A673 (cell line): ENCODE measurements at regions of chr1 and their contacts with region 1.

Region 1: DNA sequence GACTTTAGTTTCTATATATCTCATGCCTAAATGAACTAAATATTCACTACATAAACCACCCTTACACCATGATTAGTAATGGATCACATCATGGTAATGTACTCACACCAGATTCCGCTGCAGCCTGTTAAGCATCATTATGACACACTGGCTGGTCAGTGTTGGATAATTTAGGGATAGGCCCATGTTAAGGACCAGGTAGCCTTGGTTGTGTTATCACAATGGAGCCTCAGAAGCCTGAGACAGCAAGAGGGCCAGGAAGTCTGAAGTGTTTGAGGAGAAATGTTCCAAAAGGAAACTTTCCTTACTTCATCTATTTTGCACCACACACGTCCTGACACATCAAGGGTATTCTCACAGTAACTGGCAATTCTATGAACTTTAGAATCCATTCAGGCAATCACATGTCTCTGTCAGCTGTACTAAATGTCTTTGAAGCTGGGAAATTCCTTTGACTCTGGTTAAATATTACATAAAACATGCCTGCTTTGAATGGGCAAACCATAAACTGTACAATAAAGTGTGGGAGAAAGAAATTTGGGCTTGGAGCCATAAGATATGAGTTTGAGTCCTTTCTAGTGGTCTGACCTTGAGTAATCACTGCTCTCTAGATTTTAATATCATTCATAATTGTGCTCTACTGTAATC is 105.3 kb upstream of the DPT start:
- DNase-seq: peak; percentile 10
- H3K4me3 ChIP-seq: no peak overlapping the region
- H3K27ac ChIP-seq: peak overlapping the region; percentile 76
- H3K4me1 ChIP-seq: peaks cover 31% of the 10 kb centered on the region
- H3K27me3 ChIP-seq: no peaks in the 10 kb centered on the region
- CTCF ChIP-seq: no peak

Region 2: GRCh38 chr1:168488138-168488537 is 346.2 kb before region 1 on chr1:
- CTCF ChIA-PET with region 1: no interaction called
- POLR2A ChIA-PET with region 1: no interaction called
- intact Hi-C with region 1: no loop called
- DNase-seq: no peak
- H3K4me3 ChIP-seq: no peak overlapping the region
- H3K27ac ChIP-seq: no peak overlapping the region
- H3K4me1 ChIP-seq: no peaks in the 10 kb centered on the region
- H3K27me3 ChIP-seq: no peaks in the 10 kb centered on the region
- CTCF ChIP-seq: no peak

Region 3: DNA sequence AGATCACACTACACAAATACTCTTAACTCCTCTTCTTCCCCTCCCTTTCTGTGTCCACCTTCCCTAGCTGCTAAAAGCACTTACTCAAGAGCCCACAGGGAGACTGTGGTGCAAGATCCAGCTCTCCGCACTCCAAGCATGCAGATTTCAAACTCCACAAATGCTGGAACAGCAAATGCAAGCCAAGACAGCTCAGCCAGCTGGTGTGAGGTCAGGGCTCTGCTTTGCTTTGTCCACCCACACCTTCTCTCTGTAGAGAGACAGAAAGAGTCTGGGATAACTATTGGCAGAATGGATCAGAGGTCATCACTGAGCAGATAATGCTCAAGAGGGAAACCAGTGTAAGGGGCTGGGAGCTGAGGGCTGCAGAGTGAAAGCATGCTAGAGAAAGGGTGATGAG is 60.1 kb before region 1 on chr1:
- CTCF ChIA-PET with region 1: no interaction called
- POLR2A ChIA-PET with region 1: no interaction called
- intact Hi-C with region 1: no loop called
- DNase-seq: no peak
- H3K4me3 ChIP-seq: no peak overlapping the region
- H3K27ac ChIP-seq: no peak overlapping the region
- H3K4me1 ChIP-seq: no peaks in the 10 kb centered on the region
- H3K27me3 ChIP-seq: no peaks in the 10 kb centered on the region
- CTCF ChIP-seq: no peak

Region 4: DNA sequence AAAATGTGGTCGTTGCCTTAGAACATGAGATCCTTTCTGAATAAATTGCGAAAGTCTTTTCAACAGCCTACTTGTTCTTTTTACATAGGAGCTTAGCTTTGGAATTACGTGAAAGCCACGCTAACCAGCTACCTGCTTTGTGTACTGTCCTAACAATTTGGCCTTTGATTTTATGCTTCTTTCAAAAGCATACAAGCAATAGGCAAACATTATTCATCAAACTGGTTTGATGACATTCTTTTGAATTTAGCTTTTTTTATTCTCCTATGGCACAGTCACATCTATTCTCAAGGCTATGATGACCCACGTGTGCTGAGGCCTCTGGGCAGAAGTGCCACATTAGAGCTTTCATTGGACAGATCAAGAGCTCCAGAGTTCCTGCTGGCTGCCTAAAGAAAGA is 72.7 kb after region 1 on chr1:
- CTCF ChIA-PET with region 1: no interaction called
- POLR2A ChIA-PET with region 1: no interaction called
- intact Hi-C with region 1: no loop called
- DNase-seq: no peak
- H3K4me3 ChIP-seq: no peak overlapping the region
- H3K27ac ChIP-seq: no peak overlapping the region
- H3K4me1 ChIP-seq: peaks cover 4% of the 10 kb centered on the region
- H3K27me3 ChIP-seq: no peaks in the 10 kb centered on the region
- CTCF ChIP-seq: no peak

Region 5: GRCh38 chr1:169106095-169106920 is 272.0 kb after region 1 on chr1 and contains the start of gene ATP1B1:
- CTCF ChIA-PET with region 1: no interaction called
- POLR2A ChIA-PET with region 1: no interaction called
- intact Hi-C with region 1: loop called (anchors 10 kb)
- DNase-seq: peak; percentile 88
- H3K4me3 ChIP-seq: peak within 1 kb of the TSS; percentile 70
- H3K27ac ChIP-seq: peak within 1 kb of the TSS; percentile 47
- H3K4me1 ChIP-seq: peaks cover 14% of the 10 kb centered on the region
- H3K27me3 ChIP-seq: no peaks in the 10 kb centered on the region
- CTCF ChIP-seq: no peak
- total RNA-seq, gene ATP1B1: 20.2 and 23.7 TPM in 2 replicates